Right ventricle myocardium inferior (tissue), 1 donor: ENCODE measurements at regions of chr6 and their contacts with region 1.

Region 1: DNA sequence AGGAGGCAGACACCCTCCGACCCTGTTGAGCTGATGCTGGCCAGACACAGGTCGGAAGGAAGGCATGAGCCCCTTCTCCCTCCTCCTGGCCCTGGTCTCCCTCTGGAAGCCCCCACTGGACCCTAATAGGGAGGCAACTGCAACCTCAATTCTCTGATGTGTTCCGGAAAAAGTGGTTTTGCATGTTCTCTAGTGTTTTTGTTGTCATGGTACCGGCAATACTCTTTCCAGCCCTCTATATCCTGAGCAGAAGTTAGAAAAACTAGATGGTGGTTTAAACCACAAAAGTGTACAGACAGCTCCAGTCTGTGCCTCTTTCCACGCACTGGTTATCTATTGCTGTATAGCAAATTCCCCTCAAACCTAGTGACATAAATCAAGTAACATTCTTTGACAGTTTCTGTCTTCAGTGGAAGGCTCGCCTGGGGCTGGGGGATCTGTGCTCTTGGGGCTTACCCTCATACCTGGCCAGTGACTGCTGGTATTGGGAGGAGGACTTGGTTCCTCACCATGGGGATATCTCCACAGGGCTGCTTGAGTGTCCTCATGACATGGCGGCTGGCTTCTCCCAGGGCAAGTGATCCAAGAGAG is 37.0 kb downstream of the SYTL3 start:
- DNase-seq: no peak
- ATAC-seq: no peak

Region 2: GRCh38 chr6:158629367-158630221 is 57.3 kb before region 1 on chr6:
- intact Hi-C with region 1: loop called (anchors 2 kb)
- DNase-seq: no peak
- ATAC-seq: peak; percentile 29

Region 3: DNA sequence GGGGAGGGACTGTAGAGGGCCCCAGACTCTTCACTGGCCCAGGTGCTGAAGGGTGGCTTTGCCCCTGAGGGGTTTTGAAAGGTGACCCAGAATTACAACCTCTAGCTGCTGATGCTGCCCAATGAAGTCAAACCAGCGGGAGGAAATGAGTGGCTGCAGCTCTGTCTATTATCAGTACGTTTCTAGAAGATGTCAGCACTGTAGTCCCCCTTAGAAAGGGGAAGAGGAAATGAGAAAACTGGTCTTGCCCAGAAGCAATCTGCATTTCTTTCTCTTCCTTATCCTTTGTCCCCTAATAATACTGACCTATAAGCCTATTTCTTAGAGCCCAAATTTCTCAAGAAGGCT is 29.1 kb after region 1 on chr6:
- intact Hi-C with region 1: loop called (anchors 1 kb)
- DNase-seq: no peak
- ATAC-seq: peak; percentile 20